ENCODE measurements at regions of chr6 and their contacts with region 1.

Region 1: GRCh38 chr6:26596579-26597388 is at the start of gene ABT1:
- DNase-seq: peak; percentile 92 to 98 (median 95)
- ATAC-seq: peak; percentile 83 to 89 (median 86)
- H3K4me3 ChIP-seq: peak within 1 kb of the TSS; percentile 89 to 98
- H3K4me3 Mint-ChIP-seq: no peak within 1 kb of the TSS
- H3K27ac ChIP-seq: peak within 1 kb of the TSS; percentile 93
- H3K27ac Mint-ChIP-seq: no peak within 1 kb of the TSS
- H3K4me1 ChIP-seq: peaks cover 8 to 22% of the 10 kb centered on the region in 2 experiments
- H3K4me1 Mint-ChIP-seq: peaks cover 0 to 27% (median 21%) of the 10 kb centered on the region in 3 donors
- H3K27me3 ChIP-seq: peaks cover 9 to 10% of the 10 kb centered on the region in 2 experiments
- H3K27me3 Mint-ChIP-seq: peaks cover 16 to 26% of the 10 kb centered on the region in 2 donors
- total RNA-seq, gene ABT1: 27.6 to 36.4 (median 35.6) TPM

Region 2: GRCh38 chr6:26342106-26343004 is 254.4 kb before region 1 on chr6:
- CTCF ChIA-PET with region 1: interaction called, 5 to 16 read pairs
- POLR2A ChIA-PET with region 1: no interaction called
- DNase-seq: peak in 1 of 35 experiments; percentile 27
- ATAC-seq: peak; percentile 14 to 43 (median 28)
- H3K4me3 ChIP-seq: peak overlapping the region in 1 of 2 donors; percentile 33
- H3K4me3 Mint-ChIP-seq: peak overlapping the region; percentile 72 to 82 (median 77)
- H3K27ac ChIP-seq: no peak overlapping the region
- H3K27ac Mint-ChIP-seq: peak overlapping the region in 1 of 2 donors; percentile 59
- H3K4me1 ChIP-seq: peaks cover 0 to 14% of the 10 kb centered on the region in 2 experiments
- H3K4me1 Mint-ChIP-seq: peaks cover 4 to 11% (median 8%) of the 10 kb centered on the region in 3 donors
- H3K27me3 ChIP-seq: no peaks in the 10 kb centered on the region
- H3K27me3 Mint-ChIP-seq: peaks cover 0 to 1% of the 10 kb centered on the region in 2 donors

Region 3: GRCh38 chr6:26537846-26538571 is 58.8 kb before region 1 on chr6 and contains the start of gene HMGN4:
- CTCF ChIA-PET with region 1: interaction called in 1 of 2 experiments, 11 read pairs
- POLR2A ChIA-PET with region 1: interaction called, 3 read pairs
- DNase-seq: peak; percentile 66 to 96 (median 81)
- ATAC-seq: peak; percentile 71 to 78 (median 74)
- H3K4me3 ChIP-seq: peak within 1 kb of the TSS; percentile 95 to 96
- H3K4me3 Mint-ChIP-seq: peak within 1 kb of the TSS; percentile 94 to 96 (median 95)
- H3K27ac ChIP-seq: peak within 1 kb of the TSS; percentile 91
- H3K27ac Mint-ChIP-seq: peak within 1 kb of the TSS; percentile 91 to 95
- H3K4me1 ChIP-seq: peaks cover 37 to 50% of the 10 kb centered on the region in 2 experiments
- H3K4me1 Mint-ChIP-seq: peaks cover 64 to 71% (median 68%) of the 10 kb centered on the region in 3 donors
- H3K27me3 ChIP-seq: no peaks in the 10 kb centered on the region
- H3K27me3 Mint-ChIP-seq: peaks cover 0 to 4% of the 10 kb centered on the region in 2 donors
- total RNA-seq, gene HMGN4: 49.2 to 92.5 (median 62.7) TPM

Region 4: DNA sequence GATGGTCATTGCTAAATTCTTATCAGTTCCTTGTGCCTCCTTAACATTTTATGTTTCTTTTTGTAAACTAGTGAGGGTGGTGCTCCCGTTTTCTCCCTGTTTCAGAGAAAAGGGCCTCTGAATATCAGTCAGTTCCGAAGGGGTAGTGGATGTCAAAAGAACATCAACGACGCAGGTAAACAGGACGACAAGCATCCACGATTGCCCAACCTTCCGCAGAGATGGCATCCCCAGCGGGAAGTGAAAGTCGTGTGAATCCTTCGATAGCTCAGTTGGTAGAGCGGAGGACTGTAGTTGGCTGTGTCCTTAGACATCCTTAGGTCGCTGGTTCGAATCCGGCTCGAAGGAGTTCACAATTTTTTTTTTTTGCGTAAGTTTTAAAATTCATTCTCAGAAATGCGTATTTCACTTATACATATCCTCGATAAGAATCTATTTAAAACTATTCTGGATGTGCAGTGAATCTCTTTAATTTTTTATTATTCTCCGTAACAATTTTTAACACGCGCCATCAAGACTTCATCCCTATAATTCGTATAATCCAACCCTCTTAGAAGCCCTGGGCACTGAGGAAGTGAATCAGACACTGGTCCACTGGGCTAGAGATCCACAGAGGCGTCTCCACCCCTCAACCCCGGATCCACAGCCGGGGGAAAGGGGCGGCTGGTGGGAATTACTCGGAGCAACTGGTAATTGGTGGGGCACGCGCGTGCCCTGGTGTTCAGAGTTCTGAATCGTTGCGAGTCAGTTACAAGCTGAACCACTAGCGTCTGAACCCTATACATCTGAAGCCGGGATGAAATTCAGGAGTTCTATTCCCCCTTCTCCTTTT is 28.0 kb before region 1 on chr6:
- CTCF ChIA-PET with region 1: interaction called in 1 of 2 experiments, 31 read pairs
- POLR2A ChIA-PET with region 1: no interaction called
- DNase-seq: peak; percentile 89 to 100 (median 98)
- ATAC-seq: peak; percentile 77 to 83 (median 82)
- H3K4me3 ChIP-seq: peak overlapping the region; percentile 51 to 79
- H3K4me3 Mint-ChIP-seq: peak overlapping the region; percentile 92 to 94 (median 93)
- H3K27ac ChIP-seq: peak overlapping the region; percentile 50
- H3K27ac Mint-ChIP-seq: peak overlapping the region; percentile 97 to 98
- H3K4me1 ChIP-seq: peaks cover 5 to 19% of the 10 kb centered on the region in 2 experiments
- H3K4me1 Mint-ChIP-seq: peaks cover 26 to 33% (median 28%) of the 10 kb centered on the region in 3 donors
- H3K27me3 ChIP-seq: no peaks in the 10 kb centered on the region
- H3K27me3 Mint-ChIP-seq: peaks cover 4% of the 10 kb centered on the region in 2 donors

Region 5: DNA sequence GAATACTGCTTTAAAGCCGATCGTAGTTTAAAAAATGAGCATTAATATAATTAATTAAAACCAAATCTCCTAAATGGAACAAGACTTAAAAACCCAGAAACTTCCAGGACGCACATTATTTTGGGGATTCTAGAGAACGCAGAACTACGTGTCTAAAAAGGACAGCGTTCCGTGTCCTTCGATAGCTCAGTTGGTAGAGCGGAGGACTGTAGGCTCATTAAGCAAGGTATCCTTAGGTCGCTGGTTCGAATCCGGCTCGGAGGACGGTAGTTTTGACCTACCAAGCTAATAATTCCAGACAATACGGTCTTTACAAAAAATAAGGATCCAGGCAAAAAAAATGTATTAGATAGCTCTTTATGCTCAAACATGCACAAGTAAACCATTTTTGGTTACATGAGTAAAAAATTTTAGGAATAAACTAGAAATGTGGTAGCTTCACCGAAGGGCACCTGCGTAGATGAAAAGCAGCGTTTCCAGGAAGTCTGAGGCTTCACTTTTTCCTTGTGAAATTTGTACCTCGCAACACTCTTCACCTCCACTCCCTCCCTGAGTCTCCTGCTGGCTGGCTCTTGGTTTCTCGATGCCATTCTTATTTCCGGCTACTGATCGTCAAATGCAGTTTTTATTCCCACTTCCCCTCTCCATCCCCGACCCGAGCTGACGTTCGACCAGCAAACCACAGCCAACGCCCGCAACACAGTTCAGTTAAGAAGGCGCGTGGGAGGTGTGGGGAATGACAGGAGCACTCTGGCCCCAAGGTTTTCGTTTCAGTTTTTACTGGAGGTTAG is 19.7 kb before region 1 on chr6:
- CTCF ChIA-PET with region 1: interaction called in 1 of 2 experiments, 31 read pairs
- POLR2A ChIA-PET with region 1: no interaction called
- DNase-seq: peak in 19 of 35 experiments; percentile 26 to 78 (median 48)
- ATAC-seq: peak; percentile 13 to 64 (median 52)
- H3K4me3 ChIP-seq: peak overlapping the region; percentile 38 to 40
- H3K4me3 Mint-ChIP-seq: peak overlapping the region; percentile 71 to 81 (median 73)
- H3K27ac ChIP-seq: peak overlapping the region; percentile 16
- H3K27ac Mint-ChIP-seq: peak overlapping the region; percentile 74 to 84
- H3K4me1 ChIP-seq: peaks cover 7 to 17% of the 10 kb centered on the region in 2 experiments
- H3K4me1 Mint-ChIP-seq: peaks cover 19 to 30% (median 27%) of the 10 kb centered on the region in 3 donors
- H3K27me3 ChIP-seq: peaks cover 3 to 12% of the 10 kb centered on the region in 2 experiments
- H3K27me3 Mint-ChIP-seq: no peaks in the 10 kb centered on the region

Region 6: GRCh38 chr6:27280064-27280539 is 683.3 kb after region 1 on chr6:
- CTCF ChIA-PET with region 1: no interaction called
- POLR2A ChIA-PET with region 1: no interaction called
- DNase-seq: peak in 1 of 35 experiments; percentile 30
- ATAC-seq: no peak
- H3K4me3 ChIP-seq: no peak overlapping the region
- H3K4me3 Mint-ChIP-seq: no peak overlapping the region
- H3K27ac ChIP-seq: no peak overlapping the region
- H3K27ac Mint-ChIP-seq: peak overlapping the region in 1 of 2 donors; percentile 71
- H3K4me1 ChIP-seq: peaks cover 0 to 9% of the 10 kb centered on the region in 2 experiments
- H3K4me1 Mint-ChIP-seq: peaks cover 0 to 7% (median 5%) of the 10 kb centered on the region in 3 donors
- H3K27me3 ChIP-seq: peaks cover 50 to 68% of the 10 kb centered on the region in 2 experiments
- H3K27me3 Mint-ChIP-seq: peaks cover 76 to 87% of the 10 kb centered on the region in 2 donors